Naive thymus-derived CD4-positive, alpha-beta T cell (primary cell): ENCODE measurements at regions of chr12 and their contacts with region 1.

Region 1: DNA sequence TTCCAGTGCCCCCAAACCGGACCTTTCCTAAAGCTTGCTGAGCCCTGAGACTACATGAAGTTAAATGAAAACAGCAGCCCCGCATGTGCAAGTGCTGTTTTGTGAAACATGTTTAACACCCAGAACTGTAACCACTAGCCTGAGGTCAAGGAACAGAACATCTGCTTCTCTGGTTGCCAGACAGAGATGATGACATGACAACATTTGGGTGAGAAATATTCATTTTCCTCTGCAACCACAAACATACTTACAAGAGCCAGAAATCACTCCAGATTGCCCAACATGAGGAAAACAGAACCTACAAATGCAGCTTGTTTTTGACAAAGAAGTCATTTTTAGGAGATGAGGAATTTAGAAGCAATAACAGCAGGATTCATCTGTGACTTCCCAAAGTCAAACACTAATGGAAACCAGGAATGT is 110.4 kb downstream of the BCAT1 start:
- DNase-seq: peak in 1 of 9 donors; percentile 28
- ATAC-seq: peak; percentile 61
- H3K4me3 ChIP-seq: no peak overlapping the region
- H3K4me3 Mint-ChIP-seq: peak overlapping the region in 1 of 10 donors; percentile 61
- H3K27ac ChIP-seq: no peak overlapping the region
- H3K27ac Mint-ChIP-seq: peak overlapping the region in 1 of 9 donors; percentile 46
- H3K4me1 ChIP-seq: no peaks in the 10 kb centered on the region
- H3K4me1 Mint-ChIP-seq: peaks cover 0 to 33% (median 0%) of the 10 kb centered on the region in 7 donors
- H3K27me3 ChIP-seq: no peaks in the 10 kb centered on the region
- H3K27me3 Mint-ChIP-seq: peaks cover 0 to 22% (median 15%) of the 10 kb centered on the region in 5 donors

Region 2: GRCh38 chr12:22856178-22856577 is 1982.4 kb before region 1 on chr12:
- CTCF ChIA-PET with region 1: no interaction called
- POLR2A ChIA-PET with region 1: no interaction called
- intact Hi-C with region 1: loop called in 1 of 2 experiments (anchors 5 kb)
- DNase-seq: no peak
- ATAC-seq: no peak
- H3K4me3 ChIP-seq: no peak overlapping the region
- H3K4me3 Mint-ChIP-seq: no peak overlapping the region
- H3K27ac ChIP-seq: no peak overlapping the region
- H3K27ac Mint-ChIP-seq: no peak overlapping the region
- H3K4me1 ChIP-seq: no peaks in the 10 kb centered on the region
- H3K4me1 Mint-ChIP-seq: no peaks in the 10 kb centered on the region
- H3K27me3 ChIP-seq: no peaks in the 10 kb centered on the region
- H3K27me3 Mint-ChIP-seq: peaks cover 0 to 24% (median 14%) of the 10 kb centered on the region in 5 donors

Region 3: DNA sequence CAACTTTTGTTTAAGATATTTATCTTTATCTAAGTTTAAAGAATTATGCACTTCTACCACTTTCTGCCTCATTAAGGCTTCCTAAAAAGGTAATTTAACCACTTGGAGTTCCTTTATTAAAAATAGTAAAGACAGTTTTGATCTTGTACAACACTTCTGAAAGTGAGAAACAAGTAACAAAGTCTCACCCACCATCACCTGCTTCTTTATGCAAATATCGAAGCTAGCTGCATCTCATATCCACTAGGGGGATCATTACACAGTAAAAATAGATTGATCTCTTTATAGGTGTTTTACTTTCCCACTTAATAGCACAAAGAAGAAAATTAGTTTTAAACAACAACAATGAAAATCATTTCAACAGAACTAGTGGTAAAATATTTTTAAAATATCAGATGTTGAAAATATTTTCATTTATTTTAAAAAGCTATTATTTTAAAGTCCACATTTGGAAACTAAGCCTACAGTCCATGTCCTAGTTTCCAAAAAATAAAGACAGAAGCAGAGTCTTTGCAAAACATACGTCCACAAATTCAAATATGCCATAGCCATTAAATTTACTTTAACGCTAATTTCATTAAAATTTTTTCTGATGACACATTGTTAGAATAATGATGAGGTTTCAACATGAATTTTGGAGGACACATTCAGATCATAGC is 729.0 kb before region 1 on chr12:
- CTCF ChIA-PET with region 1: no interaction called
- POLR2A ChIA-PET with region 1: no interaction called
- intact Hi-C with region 1: loop called in 1 of 2 experiments (anchors 10 kb)
- DNase-seq: no peak
- ATAC-seq: no peak
- H3K4me3 ChIP-seq: no peak overlapping the region
- H3K4me3 Mint-ChIP-seq: no peak overlapping the region
- H3K27ac ChIP-seq: no peak overlapping the region
- H3K27ac Mint-ChIP-seq: no peak overlapping the region
- H3K4me1 ChIP-seq: no peaks in the 10 kb centered on the region
- H3K4me1 Mint-ChIP-seq: no peaks in the 10 kb centered on the region
- H3K27me3 ChIP-seq: no peaks in the 10 kb centered on the region
- H3K27me3 Mint-ChIP-seq: no peaks in the 10 kb centered on the region

Region 4: DNA sequence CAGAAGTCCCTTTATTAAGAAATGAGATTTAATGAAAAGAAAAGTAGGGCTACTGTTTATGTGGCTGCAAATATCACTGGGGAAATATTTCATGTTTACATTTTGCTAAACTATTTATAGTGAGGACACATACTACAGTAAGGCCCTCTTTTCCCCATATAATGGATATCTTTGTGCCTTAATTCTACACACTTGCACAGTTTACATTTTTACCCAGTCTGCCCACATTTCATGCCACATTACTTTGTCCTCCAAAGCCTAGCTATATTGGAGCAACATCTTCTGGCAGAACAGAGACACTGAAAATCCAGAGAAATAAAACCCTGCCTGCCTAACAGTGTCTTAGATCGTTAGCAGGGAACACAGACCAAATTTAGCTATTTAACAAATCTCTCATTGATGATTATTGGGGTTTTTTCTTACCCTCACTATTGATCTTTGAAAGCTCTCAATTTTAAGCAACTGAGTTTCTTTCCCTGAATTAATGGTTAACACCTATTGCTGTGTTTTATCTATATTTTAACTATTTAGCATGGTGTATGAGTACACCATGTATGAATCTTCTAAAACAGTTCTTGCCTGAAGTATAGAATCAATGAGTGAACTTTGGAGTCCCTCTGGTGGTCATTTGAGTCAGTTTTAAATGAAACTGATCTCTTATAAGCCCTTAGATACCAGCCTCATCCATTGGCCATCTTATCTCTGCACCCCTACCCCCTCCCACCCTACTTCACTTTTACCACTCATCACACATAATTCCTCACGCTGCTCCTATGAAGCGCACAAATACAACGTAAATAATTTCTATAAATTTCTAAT is 59.8 kb before region 1 on chr12:
- CTCF ChIA-PET with region 1: no interaction called
- POLR2A ChIA-PET with region 1: no interaction called
- intact Hi-C with region 1: loop called in 1 of 2 experiments (anchors 5 kb)
- DNase-seq: no peak
- ATAC-seq: no peak
- H3K4me3 ChIP-seq: no peak overlapping the region
- H3K4me3 Mint-ChIP-seq: no peak overlapping the region
- H3K27ac ChIP-seq: no peak overlapping the region
- H3K27ac Mint-ChIP-seq: no peak overlapping the region
- H3K4me1 ChIP-seq: no peaks in the 10 kb centered on the region
- H3K4me1 Mint-ChIP-seq: no peaks in the 10 kb centered on the region
- H3K27me3 ChIP-seq: no peaks in the 10 kb centered on the region
- H3K27me3 Mint-ChIP-seq: peaks cover 6 to 21% (median 16%) of the 10 kb centered on the region in 5 donors

Region 5: DNA sequence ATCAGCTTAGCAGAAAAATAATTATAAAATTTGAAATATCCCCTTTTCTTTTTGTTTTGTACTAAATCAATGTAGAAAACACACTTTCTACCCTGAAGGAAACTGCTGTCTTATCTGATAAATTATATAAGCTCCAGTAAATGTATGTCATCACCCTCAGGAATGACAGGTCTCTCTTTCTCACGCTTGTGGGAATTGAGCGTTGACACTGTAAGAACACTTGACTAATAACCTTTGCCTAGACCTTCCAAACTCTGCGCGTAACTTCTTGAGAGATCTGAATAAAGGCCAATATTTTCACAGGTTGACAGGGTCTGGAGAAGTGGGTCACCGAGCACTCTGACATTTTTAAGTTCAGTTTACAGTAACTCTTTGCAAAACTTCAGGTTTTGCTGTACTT is 28.2 kb before region 1 on chr12:
- CTCF ChIA-PET with region 1: no interaction called
- POLR2A ChIA-PET with region 1: no interaction called
- intact Hi-C with region 1: no loop called
- DNase-seq: no peak
- ATAC-seq: no peak
- H3K4me3 ChIP-seq: no peak overlapping the region
- H3K4me3 Mint-ChIP-seq: no peak overlapping the region
- H3K27ac ChIP-seq: no peak overlapping the region
- H3K27ac Mint-ChIP-seq: no peak overlapping the region
- H3K4me1 ChIP-seq: no peaks in the 10 kb centered on the region
- H3K4me1 Mint-ChIP-seq: peaks cover 0 to 21% (median 20%) of the 10 kb centered on the region in 7 donors
- H3K27me3 ChIP-seq: no peaks in the 10 kb centered on the region
- H3K27me3 Mint-ChIP-seq: peaks cover 0 to 3% (median 0%) of the 10 kb centered on the region in 5 donors

Region 6: GRCh38 chr12:24822121-24822899 is 16.2 kb before region 1 on chr12:
- CTCF ChIA-PET with region 1: no interaction called
- POLR2A ChIA-PET with region 1: no interaction called
- intact Hi-C with region 1: loop called in 1 of 2 experiments (anchors 2 kb)
- DNase-seq: no peak
- ATAC-seq: no peak
- H3K4me3 ChIP-seq: no peak overlapping the region
- H3K4me3 Mint-ChIP-seq: no peak overlapping the region
- H3K27ac ChIP-seq: no peak overlapping the region
- H3K27ac Mint-ChIP-seq: peak overlapping the region in 1 of 9 donors; percentile 20
- H3K4me1 ChIP-seq: no peaks in the 10 kb centered on the region
- H3K4me1 Mint-ChIP-seq: peaks cover 0 to 22% (median 0%) of the 10 kb centered on the region in 7 donors
- H3K27me3 ChIP-seq: no peaks in the 10 kb centered on the region
- H3K27me3 Mint-ChIP-seq: no peaks in the 10 kb centered on the region

Region 7: DNA sequence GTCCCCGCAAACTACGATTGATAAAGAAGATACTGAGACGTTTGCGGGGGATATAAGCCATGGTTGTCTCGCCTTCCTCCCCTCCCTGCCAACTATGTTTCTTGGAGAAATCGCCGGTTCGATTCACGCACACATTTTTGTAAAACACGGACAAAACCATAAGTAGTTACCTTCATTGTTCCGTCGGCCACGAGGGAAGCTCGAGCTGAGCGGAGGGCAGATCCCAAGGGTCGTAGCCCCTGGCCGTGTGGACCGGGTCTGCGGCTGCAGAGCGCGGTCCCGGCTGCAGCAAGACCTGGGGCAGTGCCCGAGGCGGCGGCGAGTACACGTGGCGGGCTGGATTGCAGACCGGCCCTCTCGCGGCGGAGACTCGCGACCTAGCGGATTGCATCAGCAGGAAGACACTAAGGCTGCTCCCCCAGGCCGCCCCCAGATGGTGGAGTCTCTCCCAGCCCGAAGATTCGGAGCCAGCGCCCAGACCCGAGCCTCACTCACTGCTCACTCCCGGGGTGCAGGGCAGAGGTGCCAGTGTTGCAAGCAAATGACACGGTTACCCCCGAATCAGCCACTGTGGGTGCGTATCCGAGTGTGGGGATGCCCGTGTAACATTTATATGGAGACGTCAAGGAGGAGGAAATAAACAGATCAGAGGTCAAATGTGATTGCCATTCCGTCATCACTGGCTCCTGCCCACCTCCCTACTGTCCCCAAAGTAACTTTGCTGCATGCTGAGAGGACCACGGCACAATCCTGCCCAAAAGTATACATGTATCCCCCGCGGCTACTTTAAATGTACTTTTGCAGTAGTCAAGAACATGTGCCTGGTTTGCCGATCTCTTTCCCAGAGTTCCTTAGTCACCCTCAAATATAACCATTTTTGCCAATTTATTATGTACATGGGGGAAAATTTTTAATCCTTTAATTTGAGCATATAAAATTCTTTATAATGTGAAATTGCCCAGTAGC is 110.5 kb after region 1 on chr12 and contains the start of gene BCAT1:
- CTCF ChIA-PET with region 1: no interaction called
- POLR2A ChIA-PET with region 1: no interaction called
- intact Hi-C with region 1: loop called in 1 of 2 experiments (anchors 1 kb)
- DNase-seq: peak in 4 of 9 donors; percentile 7 to 62 (median 18)
- ATAC-seq: peak; percentile 72
- H3K4me3 ChIP-seq: peak within 1 kb of the TSS; percentile 51
- H3K4me3 Mint-ChIP-seq: peak within 1 kb of the TSS; percentile 82 to 94 (median 88)
- H3K27ac ChIP-seq: no peak within 1 kb of the TSS
- H3K27ac Mint-ChIP-seq: peak within 1 kb of the TSS in 5 of 9 donors; percentile 36 to 86 (median 62)
- H3K4me1 ChIP-seq: peaks cover 8 to 14% of the 10 kb centered on the region in 2 donors
- H3K4me1 Mint-ChIP-seq: peaks cover 13 to 57% (median 27%) of the 10 kb centered on the region in 7 donors
- H3K27me3 ChIP-seq: peaks cover 0 to 8% of the 10 kb centered on the region in 2 donors
- H3K27me3 Mint-ChIP-seq: peaks cover 21 to 68% (median 62%) of the 10 kb centered on the region in 5 donors
- total RNA-seq, gene BCAT1: 0.70 to 29.3 (median 1.9) TPM

Region 8: DNA sequence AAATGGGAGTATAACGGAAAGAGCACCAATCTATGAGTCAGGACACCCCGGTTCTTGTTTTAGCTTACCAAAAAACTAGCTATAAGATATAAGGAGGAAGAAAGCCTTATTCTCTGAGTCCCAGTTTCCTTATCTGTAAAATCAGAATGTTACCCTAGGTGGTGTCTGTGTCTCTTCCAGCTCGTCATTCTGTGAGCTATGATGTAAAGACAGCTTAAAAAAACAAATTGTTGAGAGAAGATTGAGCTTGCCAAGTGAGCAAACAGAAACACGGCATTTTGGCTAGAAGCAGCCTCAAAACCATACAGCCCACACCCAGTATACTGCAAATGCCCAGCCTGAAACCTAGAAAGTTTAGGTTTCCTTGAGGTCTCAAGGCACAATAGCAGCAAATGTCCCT is 1508.2 kb after region 1 on chr12:
- CTCF ChIA-PET with region 1: no interaction called
- POLR2A ChIA-PET with region 1: no interaction called
- intact Hi-C with region 1: no loop called
- DNase-seq: peak in 1 of 9 donors; percentile 0
- ATAC-seq: no peak
- H3K4me3 ChIP-seq: no peak overlapping the region
- H3K4me3 Mint-ChIP-seq: no peak overlapping the region
- H3K27ac ChIP-seq: no peak overlapping the region
- H3K27ac Mint-ChIP-seq: peak overlapping the region in 2 of 9 donors; percentile 20 to 27
- H3K4me1 ChIP-seq: no peaks in the 10 kb centered on the region
- H3K4me1 Mint-ChIP-seq: peaks cover 0 to 15% (median 4%) of the 10 kb centered on the region in 7 donors
- H3K27me3 ChIP-seq: no peaks in the 10 kb centered on the region
- H3K27me3 Mint-ChIP-seq: no peaks in the 10 kb centered on the region